ENCODE measurements at regions of chr14 and their contacts with region 1.

Region 1: GRCh38 chr14:68140111-68140741 is 320.6 kb downstream of the RAD51B start:
- DNase-seq: peak; percentile 70 to 99
- ATAC-seq: peak; percentile 81 to 86
- H3K4me3 ChIP-seq: no peak overlapping the region
- H3K27ac ChIP-seq: peak overlapping the region; percentile 93 to 98
- H3K4me1 ChIP-seq: peaks cover 90% of the 10 kb centered on the region
- CTCF ChIP-seq: no peak
- EP300 ChIP-seq: peak; percentile 97 to 99
- POLR2A ChIP-seq: no peak
- RAD21 ChIP-seq: peak; percentile 55 to 79

Region 2: DNA sequence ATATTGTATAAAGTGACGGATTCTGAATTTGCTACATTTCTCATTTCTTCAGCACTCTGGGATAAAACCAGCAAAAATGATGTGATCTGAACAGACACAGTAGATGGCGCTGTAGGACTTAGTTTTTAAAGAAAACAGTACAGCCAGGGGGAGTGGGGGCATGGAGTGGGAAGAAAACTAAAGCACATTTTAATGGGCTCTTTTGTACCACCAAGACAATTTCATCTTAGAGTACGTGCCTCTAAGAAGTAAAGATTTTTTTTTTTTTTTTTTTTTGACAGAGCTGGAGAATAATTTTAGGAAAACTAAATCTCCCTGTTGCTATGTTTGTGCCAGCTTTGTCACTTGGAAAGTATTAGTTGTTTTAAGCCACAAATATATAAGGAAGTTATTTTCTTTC is 196.3 kb before region 1 on chr14:
- CTCF ChIA-PET with region 1: interaction called, 15 read pairs
- POLR2A ChIA-PET with region 1: interaction called, 7 read pairs
- DNase-seq: peak; percentile 44 to 92
- ATAC-seq: peak; percentile 88 to 89
- H3K4me3 ChIP-seq: no peak overlapping the region
- H3K27ac ChIP-seq: peak overlapping the region; percentile 82 to 86
- H3K4me1 ChIP-seq: peaks cover 51% of the 10 kb centered on the region
- CTCF ChIP-seq: peak; percentile 93
- EP300 ChIP-seq: peak in 1 of 2 experiments; percentile 18; a peak in 1 of 5 replicates
- POLR2A ChIP-seq: no peak
- RAD21 ChIP-seq: peak; percentile 96 to 98